ENCODE measurements at regions of chr3 and their contacts with region 1.

Region 1: GRCh38 chr3:138479438-138479863 is 45.0 kb downstream of the ESYT3 start:
- DNase-seq: peak; percentile 55
- H3K4me3 ChIP-seq: no peak overlapping the region
- H3K27ac ChIP-seq: no peak overlapping the region
- H3K4me1 ChIP-seq: no peaks in the 10 kb centered on the region
- H3K27me3 ChIP-seq: no peaks in the 10 kb centered on the region
- CTCF ChIP-seq: peak; percentile 79 to 87
- POLR2A ChIP-seq: no peak

Region 2: DNA sequence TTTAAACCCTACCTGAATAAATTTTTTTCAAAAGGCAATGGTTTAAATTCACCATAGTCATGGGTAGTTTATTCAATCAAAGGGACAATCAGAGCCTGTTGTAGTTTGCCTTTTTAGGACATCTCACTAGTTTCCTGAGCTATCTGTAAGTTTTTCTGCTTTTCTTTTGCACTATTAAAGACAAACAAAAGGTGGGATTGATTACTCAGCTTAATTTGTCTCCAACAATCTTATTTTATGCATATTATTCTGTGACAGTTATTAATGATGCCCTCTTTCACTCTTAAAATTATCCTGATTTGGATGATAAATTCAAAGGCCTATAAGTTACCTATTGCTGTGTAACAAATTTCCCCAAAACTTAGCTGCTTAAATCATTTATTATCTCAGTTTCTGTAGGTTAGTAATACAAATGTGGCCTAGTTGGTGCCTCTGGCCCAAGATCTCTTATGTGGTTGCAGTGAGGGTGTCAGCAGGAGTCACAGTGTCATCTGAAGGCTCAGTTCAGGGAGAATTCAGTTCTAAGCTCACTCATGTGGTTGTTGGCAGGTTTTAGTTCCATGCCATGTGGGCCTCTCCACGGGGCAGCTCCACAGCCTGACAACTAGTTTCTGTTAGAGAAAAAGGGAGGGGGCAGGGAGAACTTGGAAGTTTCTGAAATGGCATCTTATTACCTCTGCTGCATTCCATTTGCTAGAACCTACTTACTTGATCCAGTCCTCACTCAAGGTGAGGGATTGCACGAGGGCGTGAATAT is 276.3 kb before region 1 on chr3:
- CTCF ChIA-PET with region 1: no interaction called
- POLR2A ChIA-PET with region 1: no interaction called
- dilution Hi-C with region 1: no loop called
- intact Hi-C with region 1: no loop called
- DNase-seq: no peak
- H3K4me3 ChIP-seq: no peak overlapping the region
- H3K27ac ChIP-seq: no peak overlapping the region
- H3K4me1 ChIP-seq: no peaks in the 10 kb centered on the region
- H3K27me3 ChIP-seq: no peaks in the 10 kb centered on the region
- CTCF ChIP-seq: no peak
- POLR2A ChIP-seq: no peak

Region 3: GRCh38 chr3:138371070-138371965 is 108.1 kb before region 1 on chr3:
- CTCF ChIA-PET with region 1: no interaction called
- POLR2A ChIA-PET with region 1: no interaction called
- dilution Hi-C with region 1: no loop called
- intact Hi-C with region 1: no loop called
- DNase-seq: no peak
- H3K4me3 ChIP-seq: no peak overlapping the region
- H3K27ac ChIP-seq: no peak overlapping the region
- H3K4me1 ChIP-seq: no peaks in the 10 kb centered on the region
- H3K27me3 ChIP-seq: no peaks in the 10 kb centered on the region
- CTCF ChIP-seq: no peak
- POLR2A ChIP-seq: no peak

Region 4: GRCh38 chr3:138459619-138460535 is 19.6 kb before region 1 on chr3:
- CTCF ChIA-PET with region 1: interaction called, 11 read pairs
- POLR2A ChIA-PET with region 1: no interaction called
- dilution Hi-C with region 1: no loop called
- intact Hi-C with region 1: no loop called
- DNase-seq: no peak
- H3K4me3 ChIP-seq: no peak overlapping the region
- H3K27ac ChIP-seq: no peak overlapping the region
- H3K4me1 ChIP-seq: no peaks in the 10 kb centered on the region
- H3K27me3 ChIP-seq: no peaks in the 10 kb centered on the region
- CTCF ChIP-seq: no peak
- POLR2A ChIP-seq: no peak

Region 5: DNA sequence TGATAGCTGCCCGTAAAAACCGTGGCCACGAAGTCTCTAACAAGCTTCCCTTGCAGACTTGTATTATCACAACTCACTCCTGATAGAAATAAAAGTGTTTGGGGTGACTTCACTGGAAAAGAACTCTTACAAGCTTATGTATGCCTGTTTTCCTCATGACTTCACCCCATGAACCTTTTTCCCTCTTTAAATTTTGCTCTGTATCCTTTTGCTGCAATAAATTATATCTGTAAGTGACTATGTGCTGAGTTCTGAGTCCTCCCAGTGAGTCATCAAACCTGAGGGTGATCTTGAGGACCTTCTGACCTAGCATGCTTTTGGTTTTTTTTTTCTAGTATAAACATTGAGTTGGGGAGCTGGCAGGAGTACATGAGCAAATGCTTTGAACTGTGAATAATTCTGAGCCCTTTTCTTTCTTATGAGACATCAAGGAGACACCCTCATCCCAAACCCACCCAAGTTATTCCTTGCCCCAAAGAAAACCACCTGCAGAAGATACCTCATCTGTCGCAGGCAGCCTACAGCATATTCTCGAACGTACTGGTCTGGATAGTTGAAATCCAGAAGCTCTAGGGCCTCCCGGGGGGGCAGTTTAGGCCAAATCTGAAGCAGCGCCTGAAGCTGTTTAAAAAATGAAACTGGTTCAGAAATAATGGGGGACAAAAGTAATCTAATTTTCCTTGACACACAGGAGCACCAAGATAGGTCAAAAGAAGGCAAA is 215.0 kb after region 1 on chr3:
- CTCF ChIA-PET with region 1: interaction called, 9 read pairs
- POLR2A ChIA-PET with region 1: no interaction called
- dilution Hi-C with region 1: no loop called
- intact Hi-C with region 1: loop called (anchors 5 kb)
- DNase-seq: peak; percentile 58
- H3K4me3 ChIP-seq: no peak overlapping the region
- H3K27ac ChIP-seq: no peak overlapping the region
- H3K4me1 ChIP-seq: no peaks in the 10 kb centered on the region
- H3K27me3 ChIP-seq: no peaks in the 10 kb centered on the region
- CTCF ChIP-seq: no peak
- POLR2A ChIP-seq: no peak

Region 6: DNA sequence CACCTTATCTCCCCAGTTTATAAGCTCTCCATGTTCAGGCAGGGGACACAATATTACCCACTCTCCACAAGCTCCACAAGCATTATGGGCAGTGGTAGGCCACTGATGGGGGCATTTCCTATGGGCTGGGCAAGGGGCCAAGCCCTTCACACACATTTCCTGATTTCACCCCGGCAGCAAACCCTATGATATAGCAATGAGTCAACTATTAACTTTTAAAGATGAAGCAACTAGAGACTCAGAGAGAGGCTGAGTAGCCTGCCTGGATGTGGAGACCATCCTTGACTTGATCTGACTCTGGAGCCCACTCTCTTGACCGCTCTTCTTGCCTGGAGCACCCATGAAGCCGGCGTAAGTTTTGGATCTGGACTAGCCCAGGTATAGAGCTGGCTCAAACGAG is 495.0 kb after region 1 on chr3:
- CTCF ChIA-PET with region 1: interaction called, 16 read pairs
- POLR2A ChIA-PET with region 1: no interaction called
- dilution Hi-C with region 1: no loop called
- intact Hi-C with region 1: loop called (anchors 1 kb)
- DNase-seq: peak; percentile 16
- H3K4me3 ChIP-seq: no peak overlapping the region
- H3K27ac ChIP-seq: no peak overlapping the region
- H3K4me1 ChIP-seq: no peaks in the 10 kb centered on the region
- H3K27me3 ChIP-seq: peaks cover 0 to 2% of the 10 kb centered on the region in 2 experiments
- CTCF ChIP-seq: no peak
- POLR2A ChIP-seq: no peak

Region 7: GRCh38 chr3:139794469-139795265 is 1315.2 kb after region 1 on chr3:
- CTCF ChIA-PET with region 1: no interaction called
- POLR2A ChIA-PET with region 1: no interaction called
- dilution Hi-C with region 1: no loop called
- intact Hi-C with region 1: no loop called
- DNase-seq: no peak
- H3K4me3 ChIP-seq: no peak overlapping the region
- H3K27ac ChIP-seq: no peak overlapping the region
- H3K4me1 ChIP-seq: no peaks in the 10 kb centered on the region
- H3K27me3 ChIP-seq: no peaks in the 10 kb centered on the region
- CTCF ChIP-seq: no peak
- POLR2A ChIP-seq: no peak

Region 8: GRCh38 chr3:140242818-140243276 is 1763.4 kb after region 1 on chr3:
- CTCF ChIA-PET with region 1: no interaction called
- POLR2A ChIA-PET with region 1: no interaction called
- dilution Hi-C with region 1: no loop called
- intact Hi-C with region 1: no loop called
- DNase-seq: peak; percentile 3
- H3K4me3 ChIP-seq: no peak overlapping the region
- H3K27ac ChIP-seq: no peak overlapping the region
- H3K4me1 ChIP-seq: no peaks in the 10 kb centered on the region
- H3K27me3 ChIP-seq: no peaks in the 10 kb centered on the region
- CTCF ChIP-seq: no peak
- POLR2A ChIP-seq: no peak

Measured in endothelial cell of umbilical vein (primary cell).